ENCODE measurements at regions of chrX and their contacts with region 1.

Region 1: DNA sequence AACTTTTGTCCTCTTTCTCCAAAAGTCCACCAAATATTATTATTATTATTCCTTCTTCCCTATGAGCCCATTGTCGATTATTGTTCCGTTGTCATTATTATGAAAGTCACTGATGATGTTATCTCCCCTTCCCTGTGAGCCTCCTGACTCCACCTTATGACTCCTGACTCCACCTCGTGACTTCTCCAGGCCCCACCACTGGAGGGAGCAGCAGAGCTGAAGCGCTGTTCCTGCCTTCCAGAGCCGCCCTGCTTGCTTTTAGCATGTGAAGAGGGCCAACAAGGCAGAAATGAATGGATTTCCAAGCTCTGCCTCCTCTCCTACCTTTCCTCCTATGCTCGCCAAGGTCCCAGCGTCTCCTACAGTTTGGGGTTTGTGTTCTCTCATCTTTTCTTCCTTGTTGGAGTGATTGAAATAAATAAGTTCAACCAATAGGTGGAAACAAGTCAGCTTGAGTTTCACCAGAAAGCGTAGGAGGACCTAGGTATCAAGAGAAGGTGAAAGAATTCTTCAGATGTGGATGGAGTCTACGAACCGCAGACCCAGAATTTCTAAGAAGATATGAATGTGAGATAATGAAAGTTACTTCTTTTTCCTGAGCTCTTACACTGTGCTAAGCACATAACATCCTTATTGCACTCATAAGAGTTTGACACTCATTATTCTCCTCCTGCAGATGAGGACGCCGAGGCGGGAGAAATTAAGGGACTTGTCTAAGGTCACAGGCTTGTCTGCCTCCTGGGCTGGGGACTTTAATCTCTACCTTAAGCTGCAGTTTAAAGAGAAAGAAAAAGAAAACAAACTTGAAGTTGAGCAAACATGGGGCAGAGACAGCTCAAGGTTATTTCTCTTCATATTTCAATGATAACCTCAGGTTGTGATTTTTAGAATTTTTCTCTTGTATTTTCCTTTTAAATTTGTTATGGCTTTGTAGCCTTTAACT is 26.1 kb downstream of the IGSF1 start:
- DNase-seq: peak; percentile 53 to 61 (median 61)
- ATAC-seq: peak; percentile 82 to 98 (median 93)
- H3K4me3 ChIP-seq: no peak overlapping the region
- H3K27ac ChIP-seq: no peak overlapping the region
- H3K4me1 ChIP-seq: no peaks in the 10 kb centered on the region
- H3K27me3 ChIP-seq: no peaks in the 10 kb centered on the region
- CTCF ChIP-seq: peak; percentile 57 to 64 (median 60)
- POLR2A ChIP-seq: no peak

Region 2: GRCh38 chrX:131633285-131633917 is 370.4 kb after region 1 on chrX:
- intact Hi-C with region 1: loop called in 1 of 2 experiments (anchors 10 kb)
- DNase-seq: peak; percentile 40 to 56 (median 55)
- ATAC-seq: peak; percentile 85 to 97 (median 96)
- H3K4me3 ChIP-seq: no peak overlapping the region
- H3K27ac ChIP-seq: no peak overlapping the region
- H3K4me1 ChIP-seq: no peaks in the 10 kb centered on the region
- H3K27me3 ChIP-seq: peaks cover 0 to 5% of the 10 kb centered on the region in 2 donors
- CTCF ChIP-seq: peak; percentile 76 to 93 (median 91)
- POLR2A ChIP-seq: no peak